ENCODE measurements at regions of chr9 and their contacts with region 1.

Region 1: DNA sequence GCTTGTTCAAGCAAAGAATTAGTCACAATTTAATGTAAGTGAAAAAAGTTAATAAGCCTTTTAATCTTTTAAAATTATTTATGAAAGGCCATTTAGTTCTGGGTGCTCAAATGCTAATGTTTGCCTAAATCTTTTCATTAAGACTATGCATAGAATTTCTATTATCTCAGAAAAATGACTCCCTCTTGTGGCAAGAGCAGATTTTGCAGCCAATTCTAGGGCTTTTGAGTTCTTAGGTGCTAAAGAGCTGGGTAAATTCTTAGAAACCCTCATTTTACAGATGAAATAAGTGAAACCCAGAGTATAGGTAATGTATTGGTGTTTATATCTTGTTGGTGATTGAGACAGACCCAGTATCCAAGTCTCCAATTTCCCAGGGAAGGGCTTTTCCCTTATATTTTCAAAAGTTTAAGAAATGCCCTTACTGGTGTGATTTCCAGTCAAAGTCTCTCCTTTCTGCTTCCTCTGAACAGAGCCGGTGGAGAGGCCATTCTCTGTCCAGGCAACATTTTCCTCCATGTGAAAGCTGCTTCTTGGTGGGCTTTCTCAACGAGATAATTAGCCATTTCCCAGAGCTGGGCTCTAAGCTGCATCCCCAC is 24.1 kb upstream of the PCSK5 start:
- DNase-seq: peak; percentile 75
- H3K4me3 ChIP-seq: no peak overlapping the region
- H3K27ac ChIP-seq: no peak overlapping the region
- H3K4me1 ChIP-seq: no peaks in the 10 kb centered on the region
- H3K27me3 ChIP-seq: no peaks in the 10 kb centered on the region
- CTCF ChIP-seq: peak; percentile 77

Region 2: DNA sequence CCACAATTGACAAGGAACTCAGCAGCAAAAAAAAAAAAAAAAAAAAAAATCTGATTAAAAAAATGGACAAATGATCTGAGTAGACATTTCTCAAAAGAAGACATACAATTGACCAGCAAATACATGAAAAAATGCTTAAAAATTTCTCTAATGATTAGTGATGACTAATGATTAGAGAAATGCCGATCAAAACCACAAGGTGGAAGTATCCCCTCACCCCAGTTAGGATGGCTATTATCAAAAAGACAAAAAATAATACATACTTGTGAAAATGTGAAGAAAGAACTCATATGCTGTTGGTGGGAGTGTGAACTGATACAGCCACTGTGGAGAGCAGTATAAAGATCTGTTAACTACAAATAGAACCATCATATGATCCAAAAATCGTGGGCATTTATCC is 532.7 kb before region 1 on chr9:
- intact Hi-C with region 1: loop called (anchors 10 kb)
- DNase-seq: no peak
- H3K4me3 ChIP-seq: no peak overlapping the region
- H3K27ac ChIP-seq: no peak overlapping the region
- H3K4me1 ChIP-seq: no peaks in the 10 kb centered on the region
- H3K27me3 ChIP-seq: no peaks in the 10 kb centered on the region
- CTCF ChIP-seq: no peak

Region 3: GRCh38 chr9:76297721-76298239 is 431.4 kb after region 1 on chr9:
- intact Hi-C with region 1: loop called (anchors 10 kb)
- DNase-seq: no peak
- H3K4me3 ChIP-seq: no peak overlapping the region
- H3K27ac ChIP-seq: no peak overlapping the region
- H3K4me1 ChIP-seq: no peaks in the 10 kb centered on the region
- H3K27me3 ChIP-seq: no peaks in the 10 kb centered on the region
- CTCF ChIP-seq: no peak

Measured in colonic mucosa (tissue), 4 donors.